Activated B cell treated with CpG ODN at 0.5 μM for 24 hours (primary cell): ENCODE measurements at regions of chr9 and their contacts with region 1.

Region 1: GRCh38 chr9:6055213-6055612 is 39.8 kb upstream of the RANBP6 start:
- DNase-seq: no peak
- ATAC-seq: peak; percentile 23
- H3K4me3 Mint-ChIP-seq: no peak overlapping the region
- H3K27ac Mint-ChIP-seq: no peak overlapping the region
- H3K4me1 Mint-ChIP-seq: peaks cover 19% of the 10 kb centered on the region
- H3K27me3 Mint-ChIP-seq: peaks cover 3% of the 10 kb centered on the region
- CTCF ChIP-seq: no peak

Region 2: GRCh38 chr9:5886114-5886939 is 168.9 kb before region 1 on chr9:
- CTCF ChIA-PET with region 1: interaction called, 55 read pairs
- POLR2A ChIA-PET with region 1: no interaction called
- intact Hi-C with region 1: loop called (anchors 1 kb)
- DNase-seq: peak; percentile 59
- ATAC-seq: peak; percentile 90
- H3K4me3 Mint-ChIP-seq: no peak overlapping the region
- H3K27ac Mint-ChIP-seq: no peak overlapping the region
- H3K4me1 Mint-ChIP-seq: no peaks in the 10 kb centered on the region
- H3K27me3 Mint-ChIP-seq: no peaks in the 10 kb centered on the region
- CTCF ChIP-seq: peak; percentile 52

Region 3: DNA sequence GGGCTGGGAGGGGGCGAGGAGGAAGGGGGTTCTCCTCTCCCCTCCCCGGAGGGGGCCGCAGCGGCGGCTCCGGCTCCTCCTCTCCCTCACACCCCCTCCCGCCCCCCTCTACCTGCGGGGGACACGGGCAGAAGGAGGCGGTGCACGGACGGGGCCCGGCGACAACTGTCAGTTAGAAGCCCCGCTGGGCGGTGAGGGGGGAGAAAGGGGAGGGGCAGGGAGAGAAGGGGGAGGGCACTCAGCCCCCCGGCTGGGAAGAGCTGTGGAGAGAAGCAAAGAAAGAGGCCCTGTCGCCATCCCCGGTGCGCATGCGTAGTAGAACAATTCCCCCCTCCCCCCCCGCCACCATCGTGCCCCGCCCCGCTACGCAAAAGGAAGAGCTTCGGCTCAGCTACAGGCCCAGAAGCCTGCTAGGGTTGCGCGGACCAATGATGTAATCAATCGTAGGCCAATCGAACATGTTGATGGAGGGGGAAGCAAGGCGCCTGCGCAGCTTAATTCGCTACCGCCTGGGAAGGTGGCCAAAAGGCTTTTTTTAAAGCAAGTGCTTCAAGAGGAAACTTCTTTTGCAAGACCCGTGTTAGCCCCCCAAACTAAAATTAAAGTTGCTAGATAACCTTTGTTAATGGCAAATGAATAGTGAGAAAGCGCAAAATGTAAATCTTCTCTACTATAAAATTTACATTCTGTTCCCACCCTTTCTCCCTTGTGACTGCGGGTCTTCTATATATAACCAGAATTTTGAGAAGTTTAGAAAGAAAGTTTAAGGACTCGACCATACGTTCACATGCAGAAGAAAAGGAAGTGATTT is 46.8 kb before region 1 on chr9:
- CTCF ChIA-PET with region 1: interaction called, 3 read pairs
- POLR2A ChIA-PET with region 1: interaction called, 7 read pairs
- intact Hi-C with region 1: loop called (anchors 2 kb)
- DNase-seq: peak; percentile 82
- ATAC-seq: peak; percentile 75
- H3K4me3 Mint-ChIP-seq: peak overlapping the region; percentile 85
- H3K27ac Mint-ChIP-seq: peak overlapping the region; percentile 87
- H3K4me1 Mint-ChIP-seq: peaks cover 57% of the 10 kb centered on the region
- H3K27me3 Mint-ChIP-seq: no peaks in the 10 kb centered on the region
- CTCF ChIP-seq: no peak

Region 4: GRCh38 chr9:6024020-6024554 is 31.1 kb before region 1 on chr9:
- CTCF ChIA-PET with region 1: interaction called, 10 read pairs
- POLR2A ChIA-PET with region 1: no interaction called
- intact Hi-C with region 1: loop called (anchors 2 kb)
- DNase-seq: no peak
- ATAC-seq: peak; percentile 86
- H3K4me3 Mint-ChIP-seq: no peak overlapping the region
- H3K27ac Mint-ChIP-seq: no peak overlapping the region
- H3K4me1 Mint-ChIP-seq: peaks cover 4% of the 10 kb centered on the region
- H3K27me3 Mint-ChIP-seq: peaks cover 4% of the 10 kb centered on the region
- CTCF ChIP-seq: no peak

Region 5: GRCh38 chr9:6072453-6072852 is 17.2 kb after region 1 on chr9:
- CTCF ChIA-PET with region 1: interaction called, 11 read pairs
- POLR2A ChIA-PET with region 1: interaction called, 3 read pairs
- intact Hi-C with region 1: no loop called
- DNase-seq: no peak
- ATAC-seq: no peak
- H3K4me3 Mint-ChIP-seq: no peak overlapping the region
- H3K27ac Mint-ChIP-seq: no peak overlapping the region
- H3K4me1 Mint-ChIP-seq: peaks cover 19% of the 10 kb centered on the region
- H3K27me3 Mint-ChIP-seq: no peaks in the 10 kb centered on the region
- CTCF ChIP-seq: no peak

Region 6: DNA sequence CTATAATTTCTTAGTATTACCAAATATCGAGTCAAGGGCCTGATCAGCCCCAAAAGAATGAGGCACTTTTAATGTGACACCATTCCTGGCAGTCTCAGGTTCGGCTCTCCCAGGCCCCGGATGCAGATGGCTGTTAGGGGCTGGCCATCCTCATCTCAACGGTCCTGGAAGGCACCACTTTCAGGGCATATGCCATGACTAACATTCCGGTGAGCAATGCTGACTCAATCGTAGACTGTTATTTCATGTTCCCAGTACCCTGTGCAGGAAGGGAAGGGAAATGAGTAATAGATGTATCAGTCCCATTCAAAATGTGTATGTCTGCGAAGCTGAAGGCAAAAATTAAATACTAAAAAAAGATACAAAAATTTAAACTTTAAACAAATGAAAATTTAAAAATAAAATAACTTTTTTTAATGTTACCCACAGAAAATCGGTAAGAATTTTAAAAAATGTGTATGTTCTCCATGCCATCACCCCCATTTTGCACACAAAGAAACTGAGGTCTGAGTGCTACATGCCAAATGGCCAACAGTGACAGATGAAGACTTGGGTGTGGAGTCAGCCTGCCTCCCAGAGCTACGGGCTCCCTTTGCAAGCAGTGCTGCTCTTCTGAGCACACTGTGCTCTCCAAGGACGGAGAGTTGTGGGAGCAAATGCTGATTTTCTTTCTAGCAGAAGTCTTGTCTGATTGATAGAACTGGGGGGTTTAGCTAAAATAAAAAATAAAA is 511.4 kb after region 1 on chr9:
- CTCF ChIA-PET with region 1: interaction called, 7 read pairs
- POLR2A ChIA-PET with region 1: no interaction called
- intact Hi-C with region 1: loop called (anchors 1 kb)
- DNase-seq: no peak
- ATAC-seq: no peak
- H3K4me3 Mint-ChIP-seq: no peak overlapping the region
- H3K27ac Mint-ChIP-seq: no peak overlapping the region
- H3K4me1 Mint-ChIP-seq: no peaks in the 10 kb centered on the region
- H3K27me3 Mint-ChIP-seq: no peaks in the 10 kb centered on the region
- CTCF ChIP-seq: no peak